ENCODE measurements at regions of chr17 and their contacts with region 1.

Region 1: DNA sequence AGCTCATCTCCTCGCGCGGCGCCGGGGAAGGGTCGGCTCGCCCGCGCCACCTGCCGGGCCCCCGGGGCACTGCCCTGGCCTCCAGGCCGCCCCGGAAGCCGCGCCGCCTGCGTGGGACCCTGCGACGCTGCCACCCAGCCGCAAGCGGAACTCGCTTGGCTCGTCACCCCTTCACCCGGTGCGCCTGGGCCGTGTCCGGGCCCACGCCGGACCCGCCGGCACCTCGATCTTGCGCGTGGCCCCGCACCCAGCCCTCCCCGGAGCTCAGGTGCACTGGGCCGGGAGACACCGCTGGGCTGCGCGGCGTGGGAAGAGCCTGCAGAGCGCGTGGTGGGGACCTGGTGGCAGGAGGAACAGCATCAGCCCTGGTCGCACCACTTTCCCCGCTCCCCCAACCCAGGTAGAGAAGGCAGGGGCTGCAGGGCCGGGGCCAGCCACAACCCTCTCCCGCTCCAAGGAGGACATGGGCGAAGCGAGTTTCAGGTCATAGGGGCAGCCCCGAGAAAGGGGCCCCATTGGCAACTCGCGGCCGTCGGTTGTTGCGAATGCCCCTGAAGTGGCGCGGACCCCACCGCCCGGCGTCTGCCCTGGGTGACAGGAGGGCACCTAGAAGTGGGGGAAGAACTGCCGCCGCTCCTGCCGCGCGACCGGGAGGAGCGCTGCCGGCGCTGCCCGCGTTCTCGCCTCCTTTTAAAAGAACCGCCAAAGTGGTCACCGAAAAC is 363 bp upstream of the MIF4GD start:
- DNase-seq: peak; percentile 98
- ATAC-seq: peak; percentile 79
- H3K4me3 Mint-ChIP-seq: peak overlapping the region; percentile 89
- H3K27ac Mint-ChIP-seq: peak overlapping the region; percentile 89
- H3K4me1 Mint-ChIP-seq: peaks cover 28% of the 10 kb centered on the region
- H3K27me3 Mint-ChIP-seq: no peaks in the 10 kb centered on the region

Region 2: GRCh38 chr17:75228305-75228704 is 43.1 kb before region 1 on chr17:
- POLR2A ChIA-PET with region 1: no interaction called
- DNase-seq: no peak
- ATAC-seq: no peak
- H3K4me3 Mint-ChIP-seq: no peak overlapping the region
- H3K27ac Mint-ChIP-seq: no peak overlapping the region
- H3K4me1 Mint-ChIP-seq: peaks cover 2% of the 10 kb centered on the region
- H3K27me3 Mint-ChIP-seq: no peaks in the 10 kb centered on the region

Region 3: GRCh38 chr17:75240394-75241143 is 30.8 kb before region 1 on chr17:
- POLR2A ChIA-PET with region 1: interaction called, 11 read pairs
- DNase-seq: peak; percentile 51
- ATAC-seq: peak; percentile 32
- H3K4me3 Mint-ChIP-seq: no peak overlapping the region
- H3K27ac Mint-ChIP-seq: peak overlapping the region; percentile 61
- H3K4me1 Mint-ChIP-seq: peaks cover 20% of the 10 kb centered on the region
- H3K27me3 Mint-ChIP-seq: no peaks in the 10 kb centered on the region

Region 4: GRCh38 chr17:75250009-75250471 is 21.4 kb before region 1 on chr17:
- POLR2A ChIA-PET with region 1: interaction called, 13 read pairs
- DNase-seq: peak; percentile 58
- ATAC-seq: peak; percentile 95
- H3K4me3 Mint-ChIP-seq: peak overlapping the region; percentile 78
- H3K27ac Mint-ChIP-seq: peak overlapping the region; percentile 92
- H3K4me1 Mint-ChIP-seq: peaks cover 23% of the 10 kb centered on the region
- H3K27me3 Mint-ChIP-seq: no peaks in the 10 kb centered on the region